Spleen (tissue), 13 donors: ENCODE measurements at regions of chr13 and their contacts with region 1.

Region 1: DNA sequence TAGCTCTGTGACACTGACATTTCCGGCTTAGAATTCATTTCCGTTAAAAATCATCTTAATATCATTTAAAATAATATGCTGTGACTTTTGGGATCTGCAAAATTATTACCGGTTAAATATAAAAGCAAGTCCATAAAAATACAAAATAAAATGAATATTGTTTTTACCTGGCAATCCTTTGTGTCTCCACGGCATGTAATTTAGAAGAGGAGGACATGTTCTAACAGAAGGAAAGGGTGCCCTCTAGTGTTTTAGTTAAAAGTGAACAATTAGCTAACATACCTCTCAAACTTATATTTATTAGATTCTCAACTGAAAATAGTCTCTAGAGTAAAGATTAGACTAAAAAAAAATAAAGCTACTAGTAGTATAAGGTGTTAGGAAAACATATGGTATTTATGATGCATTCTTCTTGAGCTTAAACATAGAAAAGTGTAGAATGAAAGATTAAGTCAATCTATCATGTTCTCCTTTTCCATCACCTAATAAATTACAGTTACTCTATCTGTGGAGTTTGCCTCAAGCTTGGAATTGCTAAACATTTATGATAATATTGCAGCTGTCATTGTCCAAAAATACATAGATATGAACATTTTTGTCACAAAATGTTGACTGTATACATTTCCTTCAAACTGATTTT is 676.7 kb upstream of the SPRY2 start:
- DNase-seq: no peak
- H3K4me3 ChIP-seq: no peak overlapping the region
- H3K27ac ChIP-seq: no peak overlapping the region
- H3K4me1 ChIP-seq: no peaks in the 10 kb centered on the region
- H3K27me3 ChIP-seq: no peaks in the 10 kb centered on the region
- CTCF ChIP-seq: peak in 7 of 11 experiments; percentile 40 to 58 (median 53)
- POLR2A ChIP-seq: no peak

Region 2: GRCh38 chr13:79681069-79681468 is 1336.6 kb before region 1 on chr13:
- intact Hi-C with region 1: loop called (anchors 10 kb)
- DNase-seq: no peak
- H3K4me3 ChIP-seq: no peak overlapping the region
- H3K27ac ChIP-seq: no peak overlapping the region
- H3K4me1 ChIP-seq: no peaks in the 10 kb centered on the region
- H3K27me3 ChIP-seq: no peaks in the 10 kb centered on the region
- CTCF ChIP-seq: no peak
- POLR2A ChIP-seq: no peak

Region 3: GRCh38 chr13:80196756-80197155 is 820.9 kb before region 1 on chr13:
- intact Hi-C with region 1: no loop called
- DNase-seq: no peak
- H3K4me3 ChIP-seq: no peak overlapping the region
- H3K27ac ChIP-seq: no peak overlapping the region
- H3K4me1 ChIP-seq: no peaks in the 10 kb centered on the region
- H3K27me3 ChIP-seq: no peaks in the 10 kb centered on the region
- CTCF ChIP-seq: no peak
- POLR2A ChIP-seq: no peak